ENCODE measurements at regions of chr5 and their contacts with region 1.

Region 1: GRCh38 chr5:16934123-16934522 is 2.0 kb downstream of the MYO10 start:
- DNase-seq: peak in 1 of 9 donors; percentile 30
- ATAC-seq: no peak
- H3K4me3 ChIP-seq: no peak overlapping the region
- H3K4me3 Mint-ChIP-seq: peak overlapping the region in 6 of 10 donors; percentile 1 to 84 (median 22)
- H3K27ac ChIP-seq: no peak overlapping the region
- H3K27ac Mint-ChIP-seq: no peak overlapping the region
- H3K4me1 ChIP-seq: peaks cover 0 to 8% of the 10 kb centered on the region in 2 donors
- H3K4me1 Mint-ChIP-seq: peaks cover 14 to 25% (median 21%) of the 10 kb centered on the region in 7 donors
- H3K27me3 ChIP-seq: peaks cover 0 to 8% of the 10 kb centered on the region in 2 donors
- H3K27me3 Mint-ChIP-seq: peaks cover 62 to 79% (median 69%) of the 10 kb centered on the region in 5 donors

Region 2: GRCh38 chr5:16465544-16466466 is 468.3 kb before region 1 on chr5 and contains the start of gene ZNF622:
- CTCF ChIA-PET with region 1: no interaction called
- POLR2A ChIA-PET with region 1: no interaction called
- intact Hi-C with region 1: loop called in 1 of 2 experiments (anchors 5 kb)
- DNase-seq: peak; percentile 72 to 89 (median 86)
- ATAC-seq: peak; percentile 96
- H3K4me3 ChIP-seq: peak within 1 kb of the TSS; percentile 88
- H3K4me3 Mint-ChIP-seq: peak within 1 kb of the TSS; percentile 90 to 100 (median 97)
- H3K27ac ChIP-seq: peak within 1 kb of the TSS; percentile 87
- H3K27ac Mint-ChIP-seq: peak within 1 kb of the TSS; percentile 94 to 99 (median 97)
- H3K4me1 ChIP-seq: peaks cover 44 to 55% of the 10 kb centered on the region in 2 donors
- H3K4me1 Mint-ChIP-seq: peaks cover 61 to 98% (median 82%) of the 10 kb centered on the region in 7 donors
- H3K27me3 ChIP-seq: no peaks in the 10 kb centered on the region
- H3K27me3 Mint-ChIP-seq: no peaks in the 10 kb centered on the region
- total RNA-seq, gene ZNF622: 31.8 to 40.7 (median 36.0) TPM

Region 3: GRCh38 chr5:17189381-17190036 is 255.4 kb after region 1 on chr5:
- CTCF ChIA-PET with region 1: no interaction called
- POLR2A ChIA-PET with region 1: no interaction called
- intact Hi-C with region 1: loop called in 1 of 2 experiments (anchors 10 kb)
- DNase-seq: peak; percentile 5 to 52 (median 37)
- ATAC-seq: no peak
- H3K4me3 ChIP-seq: no peak overlapping the region
- H3K4me3 Mint-ChIP-seq: no peak overlapping the region
- H3K27ac ChIP-seq: no peak overlapping the region
- H3K27ac Mint-ChIP-seq: peak overlapping the region in 1 of 9 donors; percentile 60
- H3K4me1 ChIP-seq: no peaks in the 10 kb centered on the region
- H3K4me1 Mint-ChIP-seq: peaks cover 0 to 7% (median 3%) of the 10 kb centered on the region in 7 donors
- H3K27me3 ChIP-seq: no peaks in the 10 kb centered on the region
- H3K27me3 Mint-ChIP-seq: peaks cover 0 to 29% (median 6%) of the 10 kb centered on the region in 5 donors

Measured in naive thymus-derived CD4-positive, alpha-beta T cell (primary cell).